AG04450 (cell line): ENCODE measurements at regions of chr19 and their contacts with region 1.

Region 1: DNA sequence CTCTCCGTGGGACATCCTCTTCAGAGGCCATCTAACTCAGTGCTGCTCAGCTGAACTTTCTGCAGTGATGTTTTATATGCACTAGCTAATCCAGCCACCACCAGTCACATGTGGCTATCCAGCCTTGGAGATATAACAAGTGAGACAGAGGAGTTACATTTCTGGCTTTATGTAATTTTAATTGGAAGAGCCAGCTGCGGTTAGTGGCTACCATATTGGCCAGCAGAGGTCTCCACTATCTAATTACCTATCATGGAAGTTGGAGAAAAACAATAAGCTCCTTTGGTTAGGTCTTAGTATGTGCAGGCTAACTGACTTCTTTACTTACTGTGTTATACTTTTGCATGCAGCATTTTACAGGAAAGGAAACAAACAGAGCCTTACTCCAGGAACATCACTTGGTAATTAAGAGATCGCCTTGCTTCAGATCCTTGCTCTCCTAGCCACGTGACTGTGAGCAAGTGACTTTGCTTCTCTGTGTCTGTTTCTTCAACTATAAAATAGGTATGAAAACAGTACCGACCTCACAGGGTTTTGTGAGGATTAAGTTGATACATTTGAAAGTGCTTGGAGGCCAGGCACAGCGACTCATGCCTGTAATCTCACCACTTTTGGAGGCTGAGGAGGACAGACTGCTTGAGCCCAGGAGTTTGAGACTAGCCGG is 1.6 kb upstream of the KLK10 start:
- DNase-seq: peak; percentile 7
- H3K4me3 ChIP-seq: no peak overlapping the region
- H3K27ac ChIP-seq: no peak overlapping the region
- H3K27me3 ChIP-seq: peaks cover 26% of the 10 kb centered on the region
- CTCF ChIP-seq: peak; percentile 73

Region 2: DNA sequence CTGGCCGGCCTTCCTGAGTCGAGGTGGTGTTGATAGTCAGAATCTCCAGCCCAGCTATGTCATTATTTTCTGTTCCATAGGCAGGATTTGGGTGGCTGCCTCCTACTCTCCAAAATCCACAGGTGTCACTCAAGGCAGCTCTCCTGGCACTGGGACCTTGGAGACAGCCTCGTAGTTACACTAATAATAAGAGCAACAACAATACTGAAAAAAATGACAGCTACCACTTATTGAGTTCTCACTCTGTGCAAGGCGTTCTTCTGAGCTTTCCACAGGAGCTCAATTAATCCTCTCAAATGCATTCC is 25.9 kb after region 1 on chr19:
- CTCF ChIA-PET with region 1: interaction called, 12 read pairs
- POLR2A ChIA-PET with region 1: no interaction called
- DNase-seq: no peak
- H3K4me3 ChIP-seq: no peak overlapping the region
- H3K27ac ChIP-seq: no peak overlapping the region
- H3K27me3 ChIP-seq: no peaks in the 10 kb centered on the region
- CTCF ChIP-seq: no peak

Region 3: GRCh38 chr19:51097166-51097738 is 76.1 kb after region 1 on chr19:
- CTCF ChIA-PET with region 1: interaction called, 34 read pairs
- POLR2A ChIA-PET with region 1: no interaction called
- DNase-seq: no peak
- H3K4me3 ChIP-seq: no peak overlapping the region
- H3K27ac ChIP-seq: no peak overlapping the region
- H3K27me3 ChIP-seq: no peaks in the 10 kb centered on the region
- CTCF ChIP-seq: peak; percentile 67

Region 4: DNA sequence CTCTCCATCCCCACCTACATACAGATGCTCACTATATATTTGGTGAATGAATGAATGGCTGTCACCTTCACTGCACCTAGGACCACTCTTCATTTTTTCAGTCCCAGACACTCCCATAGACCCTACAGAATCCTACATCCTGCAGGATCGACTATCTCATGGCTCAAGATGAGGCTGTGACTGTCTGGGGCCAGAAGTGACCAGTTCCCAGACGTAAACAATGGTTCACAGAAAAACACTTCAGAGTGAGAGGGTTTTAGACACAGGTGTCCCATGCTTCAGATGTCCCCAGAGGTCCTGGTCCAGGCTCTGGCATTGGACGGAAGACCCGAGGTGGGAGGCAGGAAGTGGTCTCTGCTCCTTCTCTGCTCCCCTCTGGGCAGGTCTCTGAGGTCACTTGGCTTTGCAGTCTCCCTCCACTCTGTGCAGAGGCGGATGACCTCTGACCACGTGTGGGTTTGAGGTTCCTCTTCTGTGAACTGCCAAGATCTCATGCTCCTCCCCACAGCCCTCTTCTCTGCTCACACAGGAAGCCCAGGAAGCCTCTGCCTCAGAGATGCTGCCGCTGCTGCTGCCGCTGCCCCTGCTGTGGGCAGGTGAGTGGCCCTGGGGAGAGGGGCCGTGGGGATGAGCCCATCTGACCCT is 145.8 kb after region 1 on chr19:
- CTCF ChIA-PET with region 1: interaction called, 18 read pairs
- POLR2A ChIA-PET with region 1: no interaction called
- DNase-seq: no peak
- H3K4me3 ChIP-seq: no peak overlapping the region
- H3K27ac ChIP-seq: no peak overlapping the region
- H3K27me3 ChIP-seq: peaks cover 2% of the 10 kb centered on the region
- CTCF ChIP-seq: no peak